IMR-90 (cell line): ENCODE measurements at regions of chr14 and their contacts with region 1.

Region 1: DNA sequence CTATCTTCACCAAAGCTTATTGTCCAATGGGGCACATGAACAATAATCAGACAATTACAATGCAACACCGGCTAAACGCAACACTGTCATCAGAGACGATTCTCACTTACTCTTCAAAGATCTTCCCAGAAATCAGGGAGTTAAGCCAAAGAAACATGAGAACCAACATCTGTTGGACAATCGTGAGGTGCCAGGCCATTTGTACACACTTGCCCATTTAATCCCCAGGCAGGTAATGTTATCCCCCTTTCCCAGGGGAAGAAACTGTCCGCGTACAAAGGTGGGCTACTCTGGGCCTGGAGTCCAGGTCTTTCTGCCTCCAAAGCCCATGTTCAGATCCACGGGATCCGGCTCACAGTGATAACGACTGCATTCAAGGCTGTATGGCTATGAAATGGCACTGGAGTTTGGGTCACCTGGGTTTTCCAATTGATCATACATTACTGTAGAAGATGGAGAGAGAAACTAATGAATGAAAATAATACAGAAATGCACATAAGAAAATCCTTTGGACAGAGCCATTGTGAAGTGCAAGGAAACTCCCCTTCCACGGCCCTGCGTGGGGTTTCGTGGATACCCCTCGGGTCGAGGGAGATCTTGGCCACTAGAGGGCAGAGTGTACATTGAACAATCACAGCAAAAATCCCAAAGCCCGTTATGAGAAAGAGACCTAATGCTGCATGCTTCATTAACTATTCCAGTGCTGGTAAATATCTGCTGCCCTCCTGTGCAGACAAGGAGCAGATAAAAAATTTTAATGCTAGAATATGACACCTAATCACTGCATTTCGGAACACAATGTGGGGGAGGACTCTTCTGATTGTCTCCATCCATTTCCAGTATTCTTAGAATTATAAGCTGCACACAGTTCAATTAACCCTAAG is 111.4 kb downstream of the EGLN3 start:
- DNase-seq: peak; percentile 40
- ATAC-seq: peak; percentile 70
- H3K4me3 ChIP-seq: no peak overlapping the region
- H3K27ac ChIP-seq: no peak overlapping the region
- H3K4me1 ChIP-seq: no peaks in the 10 kb centered on the region
- H3K27me3 ChIP-seq: no peaks in the 10 kb centered on the region
- CTCF ChIP-seq: peak; percentile 64
- POLR2A ChIP-seq: no peak
- RAD21 ChIP-seq: peak; percentile 71

Region 2: DNA sequence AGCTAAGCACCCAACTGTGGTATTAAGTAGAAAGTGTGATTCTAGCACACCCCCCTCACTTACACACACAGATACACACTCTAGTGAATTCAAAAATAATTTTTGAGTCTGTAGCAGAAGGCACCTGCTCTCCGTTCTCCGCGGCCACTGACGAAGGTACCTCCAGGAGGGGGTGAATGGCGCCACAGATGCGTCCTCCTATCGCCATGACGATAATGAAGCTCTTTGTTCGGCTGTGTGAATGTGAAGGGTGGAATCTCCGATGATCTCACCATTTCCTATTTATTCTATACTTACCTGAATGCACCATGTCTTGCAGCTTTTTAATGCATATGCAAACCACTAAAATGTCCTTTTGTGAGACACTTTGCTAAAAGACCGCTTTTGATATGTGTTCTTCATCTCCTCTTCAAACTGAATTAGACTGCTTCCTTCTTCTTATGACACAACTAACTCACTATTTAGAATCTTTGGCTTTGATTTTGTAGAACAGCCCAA is 51.3 kb before region 1 on chr14:
- CTCF ChIA-PET with region 1: no interaction called
- POLR2A ChIA-PET with region 1: no interaction called
- dilution Hi-C with region 1: no loop called
- in situ Hi-C with region 1: no loop called
- intact Hi-C with region 1: no loop called
- DNase-seq: no peak
- ATAC-seq: no peak
- H3K4me3 ChIP-seq: no peak overlapping the region
- H3K27ac ChIP-seq: no peak overlapping the region
- H3K4me1 ChIP-seq: no peaks in the 10 kb centered on the region
- H3K27me3 ChIP-seq: no peaks in the 10 kb centered on the region; the same call in 1 of the 2 replicates
- CTCF ChIP-seq: no peak
- POLR2A ChIP-seq: no peak
- RAD21 ChIP-seq: no peak

Region 3: DNA sequence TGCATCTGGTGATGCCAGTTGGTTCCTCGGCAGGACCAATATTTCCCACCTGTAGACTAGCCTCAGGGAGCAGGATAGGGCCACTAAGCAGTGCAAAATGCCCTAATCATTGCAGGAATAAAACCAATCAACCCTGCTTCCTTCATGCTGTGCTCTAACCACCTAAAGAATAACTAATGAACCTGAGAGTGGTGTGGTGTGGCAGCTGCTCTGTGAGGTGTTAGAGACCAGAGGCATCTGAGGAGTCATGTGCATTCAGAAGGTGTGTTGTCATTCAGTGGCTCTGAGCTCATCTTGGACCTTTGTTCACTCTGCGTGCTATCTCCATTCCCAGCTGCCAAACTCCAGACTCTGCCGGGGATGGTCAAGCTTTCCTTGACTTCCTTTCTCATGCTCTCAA is 248.1 kb after region 1 on chr14:
- CTCF ChIA-PET with region 1: no interaction called
- POLR2A ChIA-PET with region 1: no interaction called
- dilution Hi-C with region 1: no loop called
- in situ Hi-C with region 1: loop called (anchors 5 kb)
- intact Hi-C with region 1: no loop called
- DNase-seq: no peak
- ATAC-seq: no peak
- H3K4me3 ChIP-seq: no peak overlapping the region
- H3K27ac ChIP-seq: no peak overlapping the region
- H3K4me1 ChIP-seq: no peaks in the 10 kb centered on the region
- H3K27me3 ChIP-seq: peaks cover 2% of the 10 kb centered on the region; the same call in 1 of the 2 replicates
- CTCF ChIP-seq: no peak
- POLR2A ChIP-seq: no peak
- RAD21 ChIP-seq: no peak

Region 4: GRCh38 chr14:34098045-34098984 is 258.9 kb after region 1 on chr14:
- CTCF ChIA-PET with region 1: interaction called, 4 read pairs
- POLR2A ChIA-PET with region 1: no interaction called
- dilution Hi-C with region 1: no loop called
- in situ Hi-C with region 1: no loop called
- intact Hi-C with region 1: loop called (anchors 1 kb)
- DNase-seq: peak; percentile 29
- ATAC-seq: peak; percentile 62
- H3K4me3 ChIP-seq: no peak overlapping the region
- H3K27ac ChIP-seq: no peak overlapping the region
- H3K4me1 ChIP-seq: no peaks in the 10 kb centered on the region
- H3K27me3 ChIP-seq: peaks cover 6% of the 10 kb centered on the region; the same call in 1 of the 2 replicates
- CTCF ChIP-seq: peak; percentile 65
- POLR2A ChIP-seq: no peak
- RAD21 ChIP-seq: peak; percentile 64

Region 5: DNA sequence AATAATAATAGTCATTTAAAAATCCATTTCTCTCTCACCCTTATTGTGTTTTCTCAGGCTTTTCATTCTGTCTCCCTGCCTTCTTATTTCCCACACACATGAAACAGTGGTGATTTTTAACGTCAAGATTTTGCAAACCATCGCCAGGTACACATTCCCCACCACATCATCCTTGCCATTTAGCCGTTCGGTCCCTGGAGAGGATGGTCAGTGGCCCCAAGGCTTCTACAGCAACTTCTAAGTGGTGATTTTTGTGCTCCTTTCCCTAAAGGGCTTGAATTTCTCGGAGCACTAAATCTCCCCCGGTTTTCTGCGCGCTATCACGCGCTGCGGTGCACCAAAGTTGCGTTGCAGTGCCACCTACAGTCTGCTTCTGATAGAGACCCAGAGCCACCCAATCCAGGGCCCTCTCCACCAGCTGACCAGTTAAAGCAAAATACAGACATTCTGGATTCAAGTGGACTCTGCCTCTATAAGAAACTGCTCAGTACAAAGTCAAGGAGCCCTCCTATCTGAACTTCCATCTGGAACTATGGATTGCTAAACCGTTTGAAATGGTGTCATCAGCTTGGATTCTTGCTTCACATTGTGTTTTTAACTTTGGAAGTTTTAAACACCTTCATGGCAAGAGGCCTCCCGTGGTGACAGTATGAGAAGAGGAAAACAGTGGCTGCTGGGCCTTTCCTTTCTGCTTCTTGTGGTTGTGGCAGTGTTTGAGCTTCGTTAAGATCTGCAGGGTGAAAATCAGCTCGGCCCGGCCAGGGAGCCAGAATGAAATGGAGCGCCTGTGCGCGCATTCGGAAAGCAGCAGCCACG is 388.6 kb after region 1 on chr14:
- CTCF ChIA-PET with region 1: no interaction called
- POLR2A ChIA-PET with region 1: no interaction called
- dilution Hi-C with region 1: no loop called
- in situ Hi-C with region 1: loop called (anchors 10 kb)
- intact Hi-C with region 1: loop called (anchors 1 kb)
- DNase-seq: peak; percentile 44
- ATAC-seq: peak; percentile 100
- H3K4me3 ChIP-seq: no peak overlapping the region
- H3K27ac ChIP-seq: no peak overlapping the region
- H3K4me1 ChIP-seq: no peaks in the 10 kb centered on the region
- H3K27me3 ChIP-seq: no peaks in the 10 kb centered on the region
- CTCF ChIP-seq: peak; percentile 68
- POLR2A ChIP-seq: no peak
- RAD21 ChIP-seq: peak; percentile 69

Region 6: DNA sequence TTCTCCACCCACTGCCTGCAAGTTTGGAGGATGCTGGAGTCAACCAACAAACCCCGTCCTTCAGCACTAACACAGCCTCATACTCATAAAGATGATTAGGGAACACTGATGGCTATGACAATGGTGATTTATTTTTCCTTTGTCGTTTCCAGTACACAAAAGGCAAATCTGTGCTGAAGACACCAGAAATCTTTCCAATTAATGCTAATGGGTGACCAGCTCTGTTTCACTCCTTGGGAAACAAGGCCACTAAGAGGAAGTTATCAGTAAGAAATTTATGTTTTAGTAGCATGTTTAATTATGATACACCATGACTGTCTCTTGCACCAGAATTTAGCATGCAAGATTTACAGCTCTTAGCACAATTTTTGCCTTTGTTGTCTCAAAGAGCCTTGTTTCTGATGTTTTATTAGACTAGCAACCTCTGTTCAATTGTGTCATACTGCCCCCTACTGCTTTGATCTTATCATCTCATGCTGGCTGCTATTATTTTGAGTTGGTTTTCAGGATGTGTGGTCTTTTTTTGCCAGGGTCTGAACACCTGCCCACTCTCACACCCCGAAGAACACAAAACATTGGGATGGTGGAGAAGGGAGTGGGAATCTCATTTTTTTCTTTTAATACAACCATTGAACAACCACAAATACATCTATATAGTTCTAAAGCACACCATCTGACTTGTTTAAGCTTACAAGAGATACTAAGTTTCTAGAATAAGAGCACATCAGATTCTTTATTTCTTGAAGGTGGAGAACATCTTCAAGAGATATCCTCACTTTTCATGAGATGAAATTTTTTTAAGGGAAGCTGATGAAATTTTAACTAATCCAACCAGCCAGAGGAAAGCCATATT is 461.7 kb after region 1 on chr14:
- CTCF ChIA-PET with region 1: no interaction called
- POLR2A ChIA-PET with region 1: no interaction called
- dilution Hi-C with region 1: no loop called
- in situ Hi-C with region 1: no loop called
- intact Hi-C with region 1: loop called (anchors 1 kb)
- DNase-seq: peak; percentile 12
- ATAC-seq: no peak
- H3K4me3 ChIP-seq: no peak overlapping the region
- H3K27ac ChIP-seq: no peak overlapping the region
- H3K4me1 ChIP-seq: no peaks in the 10 kb centered on the region
- H3K27me3 ChIP-seq: no peaks in the 10 kb centered on the region; the same call in none of the 2 replicates
- CTCF ChIP-seq: peak; percentile 49
- POLR2A ChIP-seq: no peak
- RAD21 ChIP-seq: peak; percentile 39

Region 7: DNA sequence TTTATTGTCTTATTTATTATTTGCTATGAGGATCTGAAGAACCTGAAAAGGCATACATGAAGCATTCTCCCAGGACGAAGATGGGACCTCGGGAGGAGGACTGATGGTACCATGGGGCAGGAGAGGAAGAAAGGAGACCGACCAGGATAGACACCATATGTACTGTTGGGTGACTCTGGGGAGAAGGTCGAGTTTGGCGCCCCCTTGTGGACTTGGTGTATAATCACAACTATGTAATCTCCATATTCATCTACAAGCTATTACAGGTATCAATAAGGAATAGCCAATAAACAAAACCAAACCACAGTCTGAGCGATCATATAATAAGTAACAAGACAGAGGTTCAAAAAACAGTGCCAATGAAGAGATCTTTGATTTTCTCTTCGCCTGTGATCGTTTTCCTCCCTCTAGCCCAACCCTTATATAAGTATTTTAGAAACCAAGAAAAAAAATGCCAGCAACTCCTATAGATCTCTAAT is 483.5 kb after region 1 on chr14:
- CTCF ChIA-PET with region 1: interaction called, 3 read pairs
- POLR2A ChIA-PET with region 1: no interaction called
- dilution Hi-C with region 1: no loop called
- in situ Hi-C with region 1: loop called (anchors 5 kb)
- intact Hi-C with region 1: loop called (anchors 1 kb)
- DNase-seq: peak; percentile 46
- ATAC-seq: peak; percentile 87
- H3K4me3 ChIP-seq: no peak overlapping the region
- H3K27ac ChIP-seq: no peak overlapping the region
- H3K4me1 ChIP-seq: no peaks in the 10 kb centered on the region
- H3K27me3 ChIP-seq: peaks cover 7% of the 10 kb centered on the region
- CTCF ChIP-seq: peak; percentile 60
- POLR2A ChIP-seq: no peak
- RAD21 ChIP-seq: no peak